HCT116 (cell line): ENCODE measurements at regions of chrX and their contacts with region 1.

Region 1: GRCh38 chrX:142884881-142885280 is 140.8 kb upstream of the SPANXN4 start:
- DNase-seq: no peak
- ATAC-seq: no peak
- H3K4me3 ChIP-seq: no peak overlapping the region
- H3K27ac ChIP-seq: no peak overlapping the region
- H3K4me1 ChIP-seq: no peaks in the 10 kb centered on the region
- H3K27me3 ChIP-seq: no peaks in the 10 kb centered on the region
- CTCF ChIP-seq: no peak
- POLR2A ChIP-seq: no peak
- RAD21 ChIP-seq: no peak

Region 2: DNA sequence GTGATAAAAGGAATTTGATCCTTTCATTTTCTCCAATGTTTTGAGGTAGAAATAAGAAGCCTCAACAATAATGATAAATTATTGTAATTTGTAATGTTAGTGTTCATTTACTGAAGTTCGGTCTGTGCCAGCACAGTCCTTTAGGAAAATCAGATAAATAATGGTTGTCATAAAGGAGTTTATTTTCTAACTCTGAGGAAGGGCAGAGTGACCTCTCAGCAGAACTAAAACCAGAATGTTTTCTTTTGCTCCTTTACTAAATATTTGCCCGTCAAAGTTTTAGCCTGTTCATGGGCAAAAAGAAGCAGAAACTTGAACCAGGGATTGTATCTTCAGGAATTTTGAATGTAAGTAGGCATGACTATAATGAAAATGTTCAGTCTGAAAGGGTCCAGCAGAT is 48.2 kb after region 1 on chrX:
- CTCF ChIA-PET with region 1: no interaction called
- POLR2A ChIA-PET with region 1: no interaction called
- RAD21 ChIA-PET with region 1: no interaction called
- intact Hi-C with region 1: loop called (anchors 5 kb)
- DNase-seq: no peak
- ATAC-seq: no peak
- H3K4me3 ChIP-seq: no peak overlapping the region
- H3K27ac ChIP-seq: no peak overlapping the region
- H3K4me1 ChIP-seq: no peaks in the 10 kb centered on the region
- H3K27me3 ChIP-seq: no peaks in the 10 kb centered on the region
- CTCF ChIP-seq: no peak
- POLR2A ChIP-seq: no peak
- RAD21 ChIP-seq: no peak

Region 3: GRCh38 chrX:142977128-142977914 is 92.4 kb after region 1 on chrX:
- CTCF ChIA-PET with region 1: no interaction called
- POLR2A ChIA-PET with region 1: no interaction called
- RAD21 ChIA-PET with region 1: no interaction called
- intact Hi-C with region 1: no loop called
- DNase-seq: no peak
- ATAC-seq: no peak
- H3K4me3 ChIP-seq: no peak overlapping the region
- H3K27ac ChIP-seq: no peak overlapping the region
- H3K4me1 ChIP-seq: no peaks in the 10 kb centered on the region
- H3K27me3 ChIP-seq: no peaks in the 10 kb centered on the region
- CTCF ChIP-seq: no peak
- POLR2A ChIP-seq: no peak
- RAD21 ChIP-seq: no peak

Region 4: GRCh38 chrX:143115450-143115849 is 230.6 kb after region 1 on chrX:
- CTCF ChIA-PET with region 1: no interaction called
- POLR2A ChIA-PET with region 1: no interaction called
- RAD21 ChIA-PET with region 1: no interaction called
- intact Hi-C with region 1: no loop called
- DNase-seq: no peak
- ATAC-seq: no peak
- H3K4me3 ChIP-seq: no peak overlapping the region
- H3K27ac ChIP-seq: no peak overlapping the region
- H3K4me1 ChIP-seq: no peaks in the 10 kb centered on the region
- H3K27me3 ChIP-seq: no peaks in the 10 kb centered on the region
- CTCF ChIP-seq: no peak
- POLR2A ChIP-seq: no peak
- RAD21 ChIP-seq: no peak